Heart left ventricle (tissue), 16 donors: ENCODE measurements at regions of chr10 and their contacts with region 1.

Region 1: DNA sequence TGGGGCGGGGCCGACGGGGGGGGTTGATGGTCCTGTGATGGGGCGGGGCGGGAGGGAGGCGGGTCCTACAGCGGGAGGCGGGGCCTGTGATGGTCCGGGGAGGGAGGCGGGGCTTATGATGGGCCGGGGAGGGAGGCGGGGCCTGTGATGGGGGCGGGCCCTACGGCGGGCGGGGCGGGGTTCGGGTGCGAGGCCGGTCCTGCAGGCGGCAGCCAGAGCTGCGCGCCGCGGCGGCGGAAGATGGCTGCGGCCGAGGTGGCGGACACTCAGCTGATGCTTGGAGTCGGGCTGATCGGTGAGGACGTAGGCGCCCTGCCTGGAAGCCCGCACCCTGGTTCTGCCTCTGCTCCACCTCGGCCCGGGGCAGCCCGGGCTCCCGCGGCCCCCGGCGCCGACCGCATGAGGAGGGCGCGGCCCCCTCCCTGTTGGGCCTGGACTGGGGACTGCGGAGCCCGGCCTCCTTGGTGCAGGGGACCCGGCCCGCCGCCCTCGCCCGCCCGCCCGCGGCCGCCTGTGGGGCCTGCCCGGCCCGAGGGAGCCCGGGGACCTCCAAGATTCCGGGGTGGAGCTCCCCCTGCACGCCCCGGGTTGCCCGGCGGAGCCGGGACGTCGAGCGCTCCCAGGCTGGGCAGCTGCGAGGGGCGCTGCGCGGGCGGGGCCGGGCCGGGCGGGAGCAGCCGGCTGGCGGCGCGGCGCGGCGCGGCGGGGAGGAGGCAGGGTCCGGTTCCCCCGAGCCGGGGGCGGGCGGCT is at the start of gene DENND10:
- DNase-seq: peak; percentile 80 to 92 (median 86)
- ATAC-seq: peak; percentile 87 to 97 (median 94)
- H3K4me3 ChIP-seq: peak within 1 kb of the TSS; percentile 56 to 99 (median 85)
- H3K27ac ChIP-seq: peak within 1 kb of the TSS; percentile 16 to 84 (median 72)
- H3K4me1 ChIP-seq: peaks cover 0 to 31% (median 11%) of the 10 kb centered on the region in 12 donors
- H3K27me3 ChIP-seq: no peaks in the 10 kb centered on the region
- CTCF ChIP-seq: peak in 2 of 12 donors; percentile 13 to 20
- POLR2A ChIP-seq: peak in 1 of 2 donors; percentile 90
- total RNA-seq, gene DENND10: 20.9 to 31.0 (median 24.4) TPM

Region 2: GRCh38 chr10:118850418-118851061 is 253.5 kb before region 1 on chr10:
- intact Hi-C with region 1: no loop called
- DNase-seq: peak; percentile 41 to 85 (median 51)
- ATAC-seq: no peak
- H3K4me3 ChIP-seq: no peak overlapping the region
- H3K27ac ChIP-seq: no peak overlapping the region
- H3K4me1 ChIP-seq: peaks cover 0 to 12% (median 0%) of the 10 kb centered on the region in 12 donors
- H3K27me3 ChIP-seq: no peaks in the 10 kb centered on the region
- CTCF ChIP-seq: peak; percentile 31 to 62 (median 49)
- POLR2A ChIP-seq: no peak

Region 3: DNA sequence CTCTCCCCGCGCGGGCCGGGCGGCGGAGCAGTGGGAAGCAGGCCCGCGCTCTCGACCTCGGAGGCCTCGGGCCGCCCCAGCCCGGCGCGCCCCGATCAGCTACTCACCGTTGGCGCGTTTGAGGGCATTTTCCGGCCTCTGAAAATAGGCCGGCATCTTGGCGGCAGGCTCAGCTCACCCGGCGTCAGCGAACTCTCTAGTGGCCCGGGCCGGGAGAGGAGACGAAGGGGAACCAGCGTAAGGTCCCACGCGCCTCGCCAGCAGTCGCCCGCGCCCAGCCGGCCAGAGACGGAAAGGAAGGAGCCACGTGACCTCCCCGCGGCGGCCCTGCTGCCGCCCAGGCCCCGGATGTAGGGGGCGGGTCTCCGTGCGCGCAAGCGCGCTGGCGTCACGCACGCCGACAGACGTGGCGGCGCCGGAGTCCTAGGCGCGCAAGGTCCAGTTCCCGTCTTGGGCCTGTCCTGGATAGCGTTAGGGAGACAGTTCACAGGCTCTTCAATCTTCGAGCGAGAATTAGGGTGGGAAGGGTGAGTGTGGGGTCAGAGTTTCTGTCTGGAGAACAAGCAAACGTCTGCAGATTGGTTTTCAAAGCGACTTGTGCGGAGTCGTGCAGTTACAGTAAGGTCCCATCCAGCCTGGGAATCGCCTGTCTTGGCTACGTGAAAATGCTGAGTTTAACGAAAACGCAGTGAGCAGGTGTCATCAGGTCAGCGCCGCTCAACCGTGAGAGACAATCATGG is 23.4 kb before region 1 on chr10 and contains the start of gene EIF3A:
- intact Hi-C with region 1: loop called in 4 of 10 experiments (anchors 2 kb)
- DNase-seq: peak; percentile 93 to 97 (median 94)
- ATAC-seq: peak; percentile 92 to 97 (median 97)
- H3K4me3 ChIP-seq: peak within 1 kb of the TSS; percentile 76 to 100 (median 88)
- H3K27ac ChIP-seq: peak within 1 kb of the TSS; percentile 95 to 100 (median 98)
- H3K4me1 ChIP-seq: peaks cover 0 to 43% (median 32%) of the 10 kb centered on the region in 12 donors
- H3K27me3 ChIP-seq: no peaks in the 10 kb centered on the region
- CTCF ChIP-seq: no peak
- POLR2A ChIP-seq: peak; percentile 50 to 91
- total RNA-seq, gene EIF3A: 80.3 to 143 (median 110) TPM